ENCODE measurements at regions of chr2 and their contacts with region 1.

Region 1: GRCh38 chr2:58261215-58261614 is 20.1 kb upstream of the FANCL start:
- DNase-seq: no peak
- H3K4me3 Mint-ChIP-seq: no peak overlapping the region
- H3K27ac Mint-ChIP-seq: no peak overlapping the region
- H3K4me1 Mint-ChIP-seq: peaks cover 3% of the 10 kb centered on the region
- H3K27me3 Mint-ChIP-seq: peaks cover 14% of the 10 kb centered on the region

Region 2: DNA sequence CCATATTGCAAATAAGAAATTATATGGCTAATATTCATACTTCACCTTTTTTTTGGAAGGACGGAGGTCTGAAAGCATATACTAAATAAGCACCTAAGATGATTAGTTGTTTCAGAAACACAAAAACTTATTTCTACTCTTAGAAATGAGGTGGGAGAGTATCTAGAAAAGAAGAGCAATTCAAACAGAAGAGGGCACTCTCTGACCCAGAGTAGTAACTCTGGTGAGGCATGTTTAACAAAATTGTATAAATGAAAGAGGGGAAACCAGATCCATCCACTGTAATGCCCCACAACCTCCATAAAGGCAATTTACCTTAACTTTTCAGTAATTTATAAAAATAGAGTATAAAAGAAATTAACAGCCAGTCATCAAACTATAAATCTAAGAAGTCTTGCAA is 884.2 kb before region 1 on chr2:
- CTCF ChIA-PET with region 1: no interaction called
- POLR2A ChIA-PET with region 1: no interaction called
- intact Hi-C with region 1: no loop called
- DNase-seq: no peak
- H3K4me3 Mint-ChIP-seq: no peak overlapping the region
- H3K27ac Mint-ChIP-seq: no peak overlapping the region
- H3K4me1 Mint-ChIP-seq: no peaks in the 10 kb centered on the region
- H3K27me3 Mint-ChIP-seq: no peaks in the 10 kb centered on the region

Region 3: GRCh38 chr2:58089081-58089480 is 172.1 kb before region 1 on chr2:
- CTCF ChIA-PET with region 1: no interaction called
- POLR2A ChIA-PET with region 1: no interaction called
- intact Hi-C with region 1: no loop called
- DNase-seq: no peak
- H3K4me3 Mint-ChIP-seq: no peak overlapping the region
- H3K27ac Mint-ChIP-seq: no peak overlapping the region
- H3K4me1 Mint-ChIP-seq: peaks cover 2% of the 10 kb centered on the region
- H3K27me3 Mint-ChIP-seq: no peaks in the 10 kb centered on the region

Region 4: DNA sequence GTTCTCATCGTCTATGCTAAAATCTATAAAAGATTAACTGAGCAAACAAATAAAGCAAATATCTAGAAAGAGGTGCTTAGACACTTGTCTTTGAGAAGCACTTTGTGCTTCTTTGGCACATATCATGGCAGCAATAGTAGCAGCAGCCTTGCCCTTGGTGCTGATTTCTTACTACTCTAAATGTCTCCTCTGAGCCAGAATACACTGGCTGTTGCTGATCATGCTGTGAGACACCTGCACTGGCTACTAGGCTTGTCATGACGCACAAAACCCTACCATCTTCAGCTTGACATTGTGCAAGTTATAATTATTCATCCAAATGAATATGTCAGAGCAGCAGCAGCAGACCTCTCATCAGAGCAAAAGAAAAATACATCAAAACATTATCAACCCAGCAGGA is 66.8 kb before region 1 on chr2:
- CTCF ChIA-PET with region 1: no interaction called
- POLR2A ChIA-PET with region 1: no interaction called
- intact Hi-C with region 1: no loop called
- DNase-seq: no peak
- H3K4me3 Mint-ChIP-seq: no peak overlapping the region
- H3K27ac Mint-ChIP-seq: no peak overlapping the region
- H3K4me1 Mint-ChIP-seq: no peaks in the 10 kb centered on the region
- H3K27me3 Mint-ChIP-seq: no peaks in the 10 kb centered on the region

Region 5: DNA sequence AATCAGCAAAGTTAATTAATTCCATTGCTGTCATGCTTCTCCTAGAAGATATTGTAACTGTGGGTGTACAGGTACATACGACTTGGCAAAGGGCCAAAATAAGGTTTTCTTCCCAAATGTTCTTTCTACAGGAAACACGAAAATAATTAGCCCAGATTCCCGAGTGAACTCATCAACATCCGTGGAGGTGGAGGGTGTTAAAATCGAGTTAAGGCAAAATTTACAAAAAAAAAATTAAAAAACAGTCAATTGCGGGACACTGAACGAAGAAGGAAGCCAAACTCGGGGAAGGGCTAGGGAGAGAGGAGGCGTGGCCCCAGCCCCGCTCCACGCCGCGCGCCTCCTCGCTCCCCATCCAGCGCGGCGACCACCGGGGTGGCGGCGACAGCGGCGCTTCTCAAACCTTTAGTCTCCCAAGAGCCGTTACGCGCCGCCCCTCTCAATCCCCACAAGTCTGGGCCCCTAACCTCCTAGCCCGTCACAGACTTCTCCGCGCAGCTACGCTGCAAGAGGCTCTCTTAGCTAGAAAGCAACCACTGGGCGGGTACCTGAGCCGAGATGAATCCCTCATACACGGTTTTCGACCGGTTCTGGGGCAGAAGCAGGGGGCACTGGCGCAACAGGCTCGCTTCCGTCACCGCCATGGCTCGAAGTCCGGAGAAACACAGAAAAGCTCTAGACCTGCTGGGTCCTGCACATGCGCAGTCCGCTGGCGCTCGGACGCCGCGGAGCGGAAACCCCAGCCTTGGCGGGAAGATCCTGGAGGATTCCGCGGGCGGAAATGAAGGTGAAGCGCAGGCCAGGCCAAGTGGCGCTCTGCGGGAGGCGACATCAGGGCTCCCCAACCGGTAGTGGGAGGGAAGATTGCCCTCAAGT is 20.3 kb before region 1 on chr2 and contains the start of gene FANCL:
- CTCF ChIA-PET with region 1: no interaction called
- POLR2A ChIA-PET with region 1: no interaction called
- intact Hi-C with region 1: loop called (anchors 2 kb)
- DNase-seq: peak; percentile 85
- H3K4me3 Mint-ChIP-seq: peak within 1 kb of the TSS; percentile 92
- H3K27ac Mint-ChIP-seq: peak within 1 kb of the TSS; percentile 86
- H3K4me1 Mint-ChIP-seq: peaks cover 31% of the 10 kb centered on the region
- H3K27me3 Mint-ChIP-seq: peaks cover 3% of the 10 kb centered on the region
- total RNA-seq, gene FANCL: 24.2 to 27.9 TPM

Measured in activated CD4-positive, alpha-beta memory T cell treated with anti-CD3 and anti-CD28 coated beads for 36 hours (primary cell).